Right lobe of liver (tissue), 6 donors: ENCODE measurements at regions of chr2 and their contacts with region 1.

Region 1: DNA sequence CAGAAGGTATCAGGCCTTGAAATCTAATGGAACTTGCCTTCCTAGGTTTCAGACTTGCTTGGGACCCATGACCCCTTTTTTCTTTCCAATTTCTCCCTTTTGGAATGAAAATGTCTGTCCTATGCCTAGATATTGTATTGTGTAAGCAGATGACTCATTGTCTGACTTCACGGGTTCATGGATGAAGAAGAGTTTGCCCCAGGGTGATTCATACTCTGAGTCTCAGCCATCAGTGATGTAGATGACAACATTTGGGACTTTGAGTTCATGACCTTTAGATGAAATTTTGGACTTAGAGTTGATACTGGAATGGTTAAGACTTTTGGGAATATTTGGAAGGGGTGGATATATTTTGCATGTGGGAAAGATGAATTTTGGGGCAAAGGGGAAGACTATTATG is 11.2 kb upstream of the SCYGR5 start:
- DNase-seq: no peak
- ATAC-seq: peak; percentile 47 to 84 (median 74)
- H3K4me3 ChIP-seq: no peak overlapping the region
- H3K27ac ChIP-seq: peak overlapping the region in 2 of 3 donors; percentile 34 to 72
- H3K4me1 ChIP-seq: peaks cover 2 to 9% (median 6%) of the 10 kb centered on the region in 4 donors
- H3K27me3 ChIP-seq: no peaks in the 10 kb centered on the region
- CTCF ChIP-seq: no peak
- POLR2A ChIP-seq: no peak

Region 2: GRCh38 chr2:227406177-227407031 is 249.1 kb before region 1 on chr2:
- intact Hi-C with region 1: loop called in 1 of 2 experiments (anchors 10 kb)
- DNase-seq: peak in 2 of 3 donors; percentile 46 to 77
- ATAC-seq: peak; percentile 85 to 94 (median 94)
- H3K4me3 ChIP-seq: no peak overlapping the region
- H3K27ac ChIP-seq: peak overlapping the region; percentile 16 to 76 (median 60)
- H3K4me1 ChIP-seq: peaks cover 0 to 13% (median 5%) of the 10 kb centered on the region in 4 donors
- H3K27me3 ChIP-seq: no peaks in the 10 kb centered on the region
- CTCF ChIP-seq: peak; percentile 73 to 79 (median 78)
- POLR2A ChIP-seq: peak; percentile 58